Astrocyte of the cerebellum (primary cell): ENCODE measurements at regions of chr3 and their contacts with region 1.

Region 1: GRCh38 chr3:194808640-194809097 is 123.0 kb downstream of the FAM43A start:
- DNase-seq: no peak
- H3K4me3 ChIP-seq: no peak overlapping the region
- CTCF ChIP-seq: no peak

Region 2: DNA sequence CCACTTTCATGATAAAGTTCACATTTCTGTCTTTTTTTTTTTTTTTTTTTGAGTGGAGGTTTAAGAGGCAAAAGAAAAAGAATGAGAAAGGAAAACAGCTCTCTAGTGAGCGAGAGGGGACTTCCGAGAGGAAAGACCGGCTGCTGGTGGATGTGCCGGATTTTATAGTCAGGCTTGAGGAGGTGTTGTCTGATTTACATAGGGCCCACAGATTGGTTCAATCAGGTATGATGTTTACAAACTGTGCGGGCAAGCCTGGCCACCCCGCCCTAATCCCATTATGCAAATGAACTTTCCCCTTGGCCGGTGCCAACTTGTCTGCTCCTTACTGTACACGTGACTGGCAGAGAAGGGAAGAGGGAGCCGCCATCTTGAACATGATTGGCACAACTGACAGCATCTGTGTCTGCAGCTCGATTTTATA is 78.3 kb before region 1 on chr3:
- in situ Hi-C with region 1: no loop called
- DNase-seq: no peak
- H3K4me3 ChIP-seq: no peak overlapping the region
- CTCF ChIP-seq: no peak

Region 3: GRCh38 chr3:194841066-194841841 is 32.6 kb after region 1 on chr3:
- in situ Hi-C with region 1: loop called (anchors 5 kb)
- DNase-seq: no peak
- H3K4me3 ChIP-seq: no peak overlapping the region
- CTCF ChIP-seq: no peak

Region 4: GRCh38 chr3:194870394-194871110 is 61.9 kb after region 1 on chr3:
- in situ Hi-C with region 1: no loop called
- DNase-seq: no peak
- H3K4me3 ChIP-seq: no peak overlapping the region
- CTCF ChIP-seq: no peak